ENCODE measurements at regions of chr5 and their contacts with region 1.

Region 1: DNA sequence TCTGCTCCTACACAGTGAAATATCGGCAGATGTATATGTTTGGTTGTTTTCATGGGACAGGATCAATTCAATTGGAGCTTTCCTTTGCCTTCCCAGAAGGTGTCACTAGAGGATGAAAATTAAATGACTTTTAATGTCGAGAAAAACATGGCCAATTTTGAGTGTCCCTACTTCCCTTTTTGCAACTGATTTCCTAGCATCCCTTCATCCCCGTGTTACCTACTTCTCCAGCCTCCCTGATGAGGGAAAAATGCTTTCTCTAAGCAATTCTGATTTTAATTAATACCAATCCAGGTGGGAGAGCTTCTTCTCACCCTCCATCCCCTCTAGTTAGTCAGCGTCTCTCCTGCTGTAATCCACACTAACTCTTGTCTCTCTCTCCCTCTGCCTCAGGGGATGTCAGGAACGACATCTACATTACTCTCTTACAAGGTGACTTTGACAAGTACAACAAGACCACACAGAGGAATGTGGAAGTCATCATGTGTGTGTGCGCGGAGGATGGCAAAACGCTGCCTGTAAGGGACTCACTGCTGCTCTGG is 64.9 kb downstream of the DOCK2 start:
- DNase-seq: peak; percentile 65
- ATAC-seq: peak; percentile 40
- H3K4me3 ChIP-seq: no peak overlapping the region
- H3K27ac ChIP-seq: no peak overlapping the region
- H3K4me1 ChIP-seq: peaks cover 19% of the 10 kb centered on the region
- H3K27me3 ChIP-seq: no peaks in the 10 kb centered on the region
- CTCF ChIP-seq: peak; percentile 73

Region 2: GRCh38 chr5:169788166-169788565 is 86.2 kb after region 1 on chr5:
- CTCF ChIA-PET with region 1: no interaction called
- POLR2A ChIA-PET with region 1: no interaction called
- intact Hi-C with region 1: loop called (anchors 5 kb)
- DNase-seq: peak; percentile 75
- ATAC-seq: peak; percentile 62
- H3K4me3 ChIP-seq: no peak overlapping the region
- H3K27ac ChIP-seq: no peak overlapping the region
- H3K4me1 ChIP-seq: peaks cover 10% of the 10 kb centered on the region; the same call in 1 of the 2 replicates
- H3K27me3 ChIP-seq: no peaks in the 10 kb centered on the region
- CTCF ChIP-seq: no peak

Region 3: DNA sequence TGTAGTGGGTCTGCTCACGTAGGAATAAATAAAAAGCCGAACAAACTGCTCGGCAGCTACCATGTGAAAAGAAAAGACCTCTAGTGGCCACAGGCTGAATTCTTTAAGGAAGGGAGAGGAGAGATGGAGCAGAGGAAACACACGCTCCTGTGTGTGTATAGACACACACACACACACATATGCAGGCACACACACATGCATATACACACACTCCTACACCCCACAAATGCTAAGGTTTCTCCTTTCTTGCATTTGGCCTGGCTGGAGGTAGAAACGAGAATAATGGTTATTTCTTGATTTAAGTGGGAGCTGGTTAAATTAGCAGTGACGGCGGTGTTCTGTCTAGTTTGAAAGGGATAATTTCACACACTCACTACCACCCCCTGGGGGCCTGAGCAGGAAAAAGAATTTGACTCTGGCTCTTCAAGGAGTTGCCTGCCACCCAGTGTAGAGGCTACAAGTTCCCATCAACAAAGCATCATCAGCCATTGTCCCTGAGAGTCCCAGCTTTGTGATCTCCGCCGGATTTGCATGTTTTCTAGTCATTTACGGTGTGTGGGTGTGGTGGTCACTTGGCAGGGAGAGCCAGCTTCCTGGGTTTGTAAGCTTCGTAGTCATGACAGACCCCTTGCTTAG is 278.6 kb after region 1 on chr5 and contains the start of gene INSYN2B:
- CTCF ChIA-PET with region 1: interaction called, 19 read pairs
- POLR2A ChIA-PET with region 1: no interaction called
- intact Hi-C with region 1: loop called (anchors 1 kb)
- DNase-seq: peak; percentile 88
- ATAC-seq: peak; percentile 66
- H3K4me3 ChIP-seq: peak within 1 kb of the TSS; percentile 78
- H3K27ac ChIP-seq: peak within 1 kb of the TSS; percentile 25
- H3K4me1 ChIP-seq: peaks cover 51% of the 10 kb centered on the region
- H3K27me3 ChIP-seq: no peaks in the 10 kb centered on the region
- CTCF ChIP-seq: peak; percentile 84
- total RNA-seq, gene INSYN2B: 1.1 and 1.5 TPM in 2 replicates

Region 4: DNA sequence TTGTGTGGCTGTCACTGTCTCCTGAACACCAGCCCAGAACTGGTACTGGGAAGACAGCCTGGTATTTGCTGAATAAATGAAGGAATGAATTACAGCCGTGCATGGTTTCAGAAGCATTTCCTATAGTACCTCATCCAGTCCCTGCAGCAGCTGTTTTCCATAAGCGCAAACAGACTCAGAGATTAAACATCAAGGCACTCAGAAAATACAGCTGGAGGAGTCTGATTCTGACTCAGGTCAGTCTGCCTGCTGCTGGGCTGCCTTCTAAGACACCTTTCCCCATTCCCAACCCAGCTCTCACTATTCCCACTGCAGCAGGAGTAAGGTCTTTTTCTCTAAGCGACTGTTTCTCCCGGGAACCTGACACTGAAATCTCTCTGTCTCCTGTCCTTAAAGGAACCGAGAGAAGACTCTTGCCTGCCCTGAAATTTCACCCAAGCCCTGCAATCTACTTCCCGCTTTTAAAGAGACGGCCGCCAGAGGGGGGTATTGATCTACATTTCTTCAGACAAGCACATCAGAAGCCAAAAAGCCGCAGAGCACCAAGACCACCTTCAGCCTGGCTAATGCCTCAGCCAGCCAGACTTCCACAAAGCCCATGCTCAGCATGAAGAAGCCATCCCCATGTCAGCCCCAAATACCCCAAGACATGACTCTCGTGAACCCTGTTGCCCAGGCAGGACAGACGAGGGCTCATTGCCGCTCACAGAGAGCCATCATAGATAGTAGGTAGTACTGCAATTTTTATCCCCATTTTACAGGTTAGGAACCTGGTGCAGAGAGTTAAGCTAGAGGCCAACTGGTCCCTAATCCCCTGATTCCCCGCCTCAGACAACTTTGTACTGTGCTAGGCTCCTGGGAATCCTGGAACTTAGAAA is 398.3 kb after region 1 on chr5:
- CTCF ChIA-PET with region 1: no interaction called
- POLR2A ChIA-PET with region 1: no interaction called
- intact Hi-C with region 1: loop called (anchors 1 kb)
- DNase-seq: peak; percentile 74
- ATAC-seq: peak; percentile 81
- H3K4me3 ChIP-seq: no peak overlapping the region
- H3K27ac ChIP-seq: no peak overlapping the region
- H3K4me1 ChIP-seq: peaks cover 7% of the 10 kb centered on the region; the same call in 1 of the 2 replicates
- H3K27me3 ChIP-seq: no peaks in the 10 kb centered on the region
- CTCF ChIP-seq: peak; percentile 75

Measured in PC-3 (cell line).